CD8-positive, alpha-beta memory T cell (primary cell): ENCODE measurements at regions of chr1 and their contacts with region 1.

Region 1: DNA sequence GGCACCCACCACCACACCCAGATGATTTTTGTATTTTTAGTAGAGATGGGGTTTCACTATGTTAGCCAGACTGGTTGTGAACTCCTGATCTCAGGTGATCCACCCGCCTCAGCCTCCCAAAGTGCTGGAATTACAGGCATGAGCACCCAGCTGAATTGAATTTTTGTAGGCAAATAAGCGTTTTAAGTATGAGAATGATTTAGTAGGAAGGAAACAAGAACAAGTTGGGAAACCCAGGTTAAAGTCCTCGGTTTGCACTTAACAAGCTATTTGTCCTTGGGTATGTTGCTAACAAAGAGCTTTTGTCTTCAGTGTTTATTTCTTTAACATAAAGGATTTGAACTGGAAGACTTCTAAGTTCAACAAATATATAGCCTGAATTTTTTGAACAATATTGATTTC is 23.9 kb downstream of the BTF3L4 start:
- DNase-seq: no peak
- H3K4me3 ChIP-seq: no peak overlapping the region
- H3K4me3 Mint-ChIP-seq: no peak overlapping the region
- H3K27ac ChIP-seq: no peak overlapping the region
- H3K27ac Mint-ChIP-seq: no peak overlapping the region
- H3K4me1 ChIP-seq: no peaks in the 10 kb centered on the region
- H3K4me1 Mint-ChIP-seq: peaks cover 4 to 22% (median 14%) of the 10 kb centered on the region in 3 donors
- H3K27me3 ChIP-seq: no peaks in the 10 kb centered on the region
- H3K27me3 Mint-ChIP-seq: no peaks in the 10 kb centered on the region

Region 2: GRCh38 chr1:51969038-51969705 is 110.8 kb before region 1 on chr1:
- CTCF ChIA-PET with region 1: no interaction called
- POLR2A ChIA-PET with region 1: no interaction called
- DNase-seq: no peak
- H3K4me3 ChIP-seq: no peak overlapping the region
- H3K4me3 Mint-ChIP-seq: no peak overlapping the region
- H3K27ac ChIP-seq: no peak overlapping the region
- H3K27ac Mint-ChIP-seq: peak overlapping the region in 1 of 8 donors; percentile 17
- H3K4me1 ChIP-seq: no peaks in the 10 kb centered on the region
- H3K4me1 Mint-ChIP-seq: no peaks in the 10 kb centered on the region
- H3K27me3 ChIP-seq: no peaks in the 10 kb centered on the region
- H3K27me3 Mint-ChIP-seq: peaks cover 5 to 22% of the 10 kb centered on the region in 2 donors

Region 3: GRCh38 chr1:52814443-52814842 is 734.4 kb after region 1 on chr1:
- CTCF ChIA-PET with region 1: no interaction called
- POLR2A ChIA-PET with region 1: interaction called, 13 read pairs
- DNase-seq: no peak
- H3K4me3 ChIP-seq: no peak overlapping the region
- H3K4me3 Mint-ChIP-seq: no peak overlapping the region
- H3K27ac ChIP-seq: no peak overlapping the region
- H3K27ac Mint-ChIP-seq: peak overlapping the region in 1 of 8 donors; percentile 70
- H3K4me1 ChIP-seq: no peaks in the 10 kb centered on the region
- H3K4me1 Mint-ChIP-seq: no peaks in the 10 kb centered on the region
- H3K27me3 ChIP-seq: no peaks in the 10 kb centered on the region
- H3K27me3 Mint-ChIP-seq: no peaks in the 10 kb centered on the region